Naive thymus-derived CD4-positive, alpha-beta T cell (primary cell): ENCODE measurements at regions of chr12 and their contacts with region 1.

Region 1: DNA sequence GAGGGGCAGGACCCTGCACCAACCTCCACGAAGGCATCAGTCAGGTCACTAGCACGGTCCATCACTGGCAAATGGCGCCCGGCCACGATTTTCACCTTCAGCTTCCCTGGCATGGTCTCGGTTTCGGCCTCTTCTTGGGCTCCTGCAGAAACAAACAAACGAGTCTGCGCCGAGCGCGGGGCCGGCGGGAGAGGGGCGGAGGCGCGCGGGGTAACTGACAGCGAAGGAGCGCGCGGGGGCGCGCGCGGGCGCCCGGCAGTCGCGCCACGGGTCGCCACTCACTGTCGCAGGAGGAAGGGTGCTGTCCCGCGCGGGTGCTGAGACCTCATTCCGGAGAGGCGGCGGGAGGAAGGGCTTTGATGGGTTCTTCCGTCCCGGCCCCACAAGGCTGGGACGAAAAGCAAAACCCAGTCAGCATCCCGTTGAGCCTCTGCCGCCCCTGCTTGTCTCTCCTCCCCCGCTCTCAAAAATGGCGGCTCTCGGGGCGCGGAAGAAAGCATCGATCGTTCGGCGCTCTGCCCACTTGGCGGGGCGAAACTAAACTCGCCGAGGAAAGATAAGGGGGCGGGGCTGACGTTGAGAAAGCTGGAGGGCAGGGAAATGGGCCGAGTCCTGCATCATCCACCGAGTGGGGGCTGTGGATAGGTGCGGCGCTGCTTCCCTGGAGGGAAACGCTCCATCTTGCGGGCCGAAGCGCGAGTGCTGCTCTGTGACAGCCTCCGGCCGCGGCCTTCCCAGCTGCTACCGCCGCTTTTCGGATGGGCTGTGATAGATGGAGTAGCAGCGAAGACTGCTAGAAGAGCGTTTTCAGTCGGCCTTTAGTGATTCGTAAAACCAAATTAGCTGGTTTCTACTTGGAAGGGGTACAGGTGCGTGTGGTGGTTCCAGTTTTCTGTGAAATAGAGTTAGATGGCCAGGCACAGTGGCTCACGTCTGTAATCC is at the start of gene C2CD5:
- DNase-seq: peak; percentile 84 to 96 (median 96)
- ATAC-seq: peak; percentile 96
- H3K4me3 ChIP-seq: peak within 1 kb of the TSS; percentile 95
- H3K4me3 Mint-ChIP-seq: peak within 1 kb of the TSS; percentile 91 to 98 (median 92)
- H3K27ac ChIP-seq: peak within 1 kb of the TSS; percentile 79
- H3K27ac Mint-ChIP-seq: peak within 1 kb of the TSS; percentile 94 to 98 (median 95)
- H3K4me1 ChIP-seq: peaks cover 7 to 18% of the 10 kb centered on the region in 2 donors
- H3K4me1 Mint-ChIP-seq: peaks cover 32 to 47% (median 38%) of the 10 kb centered on the region in 7 donors
- H3K27me3 ChIP-seq: no peaks in the 10 kb centered on the region
- H3K27me3 Mint-ChIP-seq: peaks cover 0 to 12% (median 4%) of the 10 kb centered on the region in 5 donors
- total RNA-seq, gene C2CD5: 31.5 to 58.9 (median 47.1) TPM

Region 2: GRCh38 chr12:22046090-22046967 is 498.0 kb before region 1 on chr12 and contains the start of gene CMAS:
- CTCF ChIA-PET with region 1: no interaction called
- POLR2A ChIA-PET with region 1: interaction called, 3 read pairs
- intact Hi-C with region 1: loop called (anchors 1 kb)
- DNase-seq: peak; percentile 49 to 76 (median 65)
- ATAC-seq: peak; percentile 93
- H3K4me3 ChIP-seq: peak within 1 kb of the TSS; percentile 82
- H3K4me3 Mint-ChIP-seq: peak within 1 kb of the TSS; percentile 80 to 99 (median 94)
- H3K27ac ChIP-seq: peak within 1 kb of the TSS; percentile 82
- H3K27ac Mint-ChIP-seq: peak within 1 kb of the TSS; percentile 35 to 95 (median 89)
- H3K4me1 ChIP-seq: peaks cover 10 to 15% of the 10 kb centered on the region in 2 donors
- H3K4me1 Mint-ChIP-seq: peaks cover 27 to 65% (median 48%) of the 10 kb centered on the region in 7 donors
- H3K27me3 ChIP-seq: no peaks in the 10 kb centered on the region
- H3K27me3 Mint-ChIP-seq: no peaks in the 10 kb centered on the region
- total RNA-seq, gene CMAS: 10.1 to 33.6 (median 19.4) TPM

Region 3: DNA sequence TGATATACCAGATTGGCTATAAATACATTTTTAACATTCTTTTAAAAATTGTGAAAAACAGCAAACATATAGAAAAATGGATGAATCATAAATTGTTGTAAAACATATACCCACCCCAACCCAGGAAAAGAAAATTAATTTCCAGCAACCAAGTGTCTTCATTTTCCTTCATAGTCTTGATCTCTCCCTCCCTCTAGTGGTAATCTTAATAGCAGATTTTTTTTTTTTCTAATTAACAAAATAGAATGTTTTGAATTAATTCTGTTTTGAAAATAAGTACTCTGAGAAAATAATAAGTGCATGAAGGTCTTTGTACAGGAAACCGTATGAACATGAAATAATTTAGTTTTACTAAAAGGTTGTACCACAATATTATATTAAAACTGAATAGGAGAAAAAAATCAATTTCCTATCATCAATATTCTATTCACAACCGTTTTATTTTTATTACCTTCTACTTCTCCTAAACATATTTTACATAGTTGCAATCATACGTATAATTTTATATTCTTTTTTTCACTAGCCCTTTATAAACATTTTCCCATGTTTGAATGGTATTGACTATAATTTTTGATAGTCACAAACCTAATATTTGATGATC is 87.7 kb after region 1 on chr12:
- CTCF ChIA-PET with region 1: interaction called, 5 read pairs
- POLR2A ChIA-PET with region 1: interaction called, 26 read pairs
- intact Hi-C with region 1: loop called in 1 of 2 experiments (anchors 1 kb)
- DNase-seq: peak in 5 of 9 donors; percentile 25 to 41 (median 30)
- ATAC-seq: peak; percentile 63
- H3K4me3 ChIP-seq: no peak overlapping the region
- H3K4me3 Mint-ChIP-seq: peak overlapping the region in 1 of 10 donors; percentile 10
- H3K27ac ChIP-seq: no peak overlapping the region
- H3K27ac Mint-ChIP-seq: peak overlapping the region in 3 of 9 donors; percentile 4 to 26 (median 22)
- H3K4me1 ChIP-seq: peaks cover 25 to 27% of the 10 kb centered on the region in 2 donors
- H3K4me1 Mint-ChIP-seq: peaks cover 51 to 93% (median 86%) of the 10 kb centered on the region in 7 donors
- H3K27me3 ChIP-seq: no peaks in the 10 kb centered on the region
- H3K27me3 Mint-ChIP-seq: no peaks in the 10 kb centered on the region